ENCODE measurements at regions of chr5 and their contacts with region 1.

Region 1: DNA sequence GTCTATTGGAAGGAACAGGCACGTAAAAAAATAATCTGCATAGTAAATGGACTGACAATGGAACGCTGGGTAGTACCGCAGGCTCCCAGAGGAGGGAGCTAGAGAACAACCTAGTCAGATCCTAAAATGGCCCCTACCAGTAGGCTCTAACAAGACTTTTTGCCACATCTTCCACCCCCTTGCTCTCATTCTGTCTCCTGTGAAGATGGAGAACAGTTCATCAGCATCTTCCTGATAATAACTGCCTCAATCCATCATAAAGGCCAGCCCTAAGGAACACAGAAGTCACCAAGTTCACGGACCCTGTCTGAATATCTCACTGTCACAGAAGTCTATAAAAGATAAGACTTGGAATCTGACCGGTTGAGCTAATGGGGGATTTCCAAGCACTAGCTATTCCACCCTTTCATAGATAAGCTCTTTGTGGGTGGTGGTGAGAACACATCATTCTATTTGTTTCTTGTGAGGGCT is 133.4 kb downstream of the SLC1A3 start:
- DNase-seq: peak; percentile 66
- CTCF ChIP-seq: peak; percentile 82

Region 2: GRCh38 chr5:36875790-36876388 is 136.1 kb after region 1 on chr5:
- in situ Hi-C with region 1: loop called (anchors 10 kb)
- DNase-seq: peak; percentile 81
- CTCF ChIP-seq: peak; percentile 48

Region 3: DNA sequence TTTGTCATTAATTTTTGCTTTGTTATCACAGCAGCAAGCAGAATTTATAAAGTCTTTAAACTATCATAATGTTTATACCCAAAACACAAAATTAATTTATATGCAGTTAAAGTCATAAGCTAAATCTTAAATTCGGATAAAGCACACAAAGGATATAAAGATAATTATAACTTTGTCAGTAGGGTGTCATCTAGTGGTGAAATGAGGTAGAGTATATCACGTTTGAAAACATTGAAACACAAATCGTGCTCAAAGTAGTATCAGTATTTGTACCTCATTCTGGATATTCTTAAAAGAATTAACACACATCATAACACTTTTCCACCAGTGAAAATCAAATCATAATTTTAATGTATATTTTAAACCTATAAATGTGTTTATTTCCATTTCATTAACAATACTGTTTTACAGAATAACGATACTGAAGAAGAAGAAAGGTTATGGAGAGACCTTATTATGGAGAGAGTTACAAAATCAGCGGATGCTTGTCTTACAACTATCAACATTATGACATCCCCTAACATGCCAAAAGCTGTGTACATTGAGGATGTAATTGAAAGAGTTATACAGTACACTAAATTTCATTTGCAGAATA is 266.3 kb after region 1 on chr5:
- in situ Hi-C with region 1: loop called (anchors 10 kb)
- DNase-seq: peak; percentile 13
- CTCF ChIP-seq: peak; percentile 26

Measured in GM13976 (cell line).